ENCODE measurements at regions of chr3 and their contacts with region 1.

Region 1: DNA sequence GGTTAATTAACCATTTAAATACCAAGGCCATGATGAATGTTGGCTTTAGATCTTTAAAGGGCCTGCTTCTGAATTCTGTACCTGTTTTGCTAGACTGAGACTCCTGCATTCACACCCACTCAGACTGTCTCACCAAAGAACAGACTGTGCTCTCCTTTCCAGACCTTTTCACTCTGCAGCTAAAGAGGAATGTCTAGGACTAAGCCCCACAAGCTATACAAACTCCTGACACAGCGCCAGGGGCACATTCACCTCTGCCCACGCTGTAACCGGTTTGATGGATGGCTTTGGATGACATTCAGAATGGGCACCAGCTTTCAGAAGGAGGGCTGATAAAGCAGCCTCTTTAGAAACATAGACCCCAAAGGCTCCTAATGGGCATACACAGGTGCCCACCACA is 200.1 kb downstream of the KCNMB2 start:
- DNase-seq: no peak

Region 2: GRCh38 chr3:178676942-178677790 is 59.1 kb before region 1 on chr3:
- intact Hi-C with region 1: loop called (anchors 5 kb)
- DNase-seq: no peak

Measured in cardiac septum (tissue), 1 donor.